OCI-LY7 (cell line): ENCODE measurements at regions of chr12 and their contacts with region 1.

Region 1: DNA sequence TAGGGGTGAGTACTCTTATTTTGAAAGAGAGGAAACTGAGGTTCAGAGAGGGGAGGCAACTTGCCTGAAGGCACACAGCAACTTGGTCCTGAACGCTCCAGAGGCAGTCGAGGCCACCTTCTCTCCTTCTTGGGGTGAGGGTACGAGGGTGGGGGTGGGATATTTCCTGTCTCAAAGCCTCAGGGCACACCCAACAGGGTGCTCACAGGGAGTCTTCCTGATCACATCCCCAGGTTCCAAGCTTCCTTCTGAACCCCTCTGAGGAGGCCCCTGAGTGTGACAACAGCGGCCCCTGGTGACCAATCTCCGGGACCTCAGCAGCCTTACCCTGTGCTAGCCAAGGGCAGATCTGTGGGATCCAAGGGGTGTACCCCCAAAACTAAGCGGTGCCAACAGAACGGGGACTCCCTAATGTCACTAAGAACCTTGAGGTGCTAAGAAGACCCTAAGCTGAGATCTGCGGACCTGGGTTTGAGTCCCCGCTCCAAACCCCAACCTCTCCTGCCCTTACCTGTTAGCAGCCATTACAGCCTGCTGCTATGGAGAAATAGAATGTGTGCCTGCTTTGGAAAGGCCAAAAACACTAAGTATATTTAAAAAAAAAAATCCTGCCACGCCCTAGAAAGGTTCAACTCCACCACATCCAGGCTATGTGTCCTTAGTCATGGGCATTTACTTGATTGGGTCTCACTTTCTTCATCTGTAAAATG is 57.9 kb downstream of the TRPV4 start:
- DNase-seq: peak; percentile 62
- H3K4me3 ChIP-seq: no peak overlapping the region
- H3K27ac ChIP-seq: no peak overlapping the region
- H3K4me1 ChIP-seq: peaks cover 10% of the 10 kb centered on the region
- CTCF ChIP-seq: peak; percentile 90

Region 2: DNA sequence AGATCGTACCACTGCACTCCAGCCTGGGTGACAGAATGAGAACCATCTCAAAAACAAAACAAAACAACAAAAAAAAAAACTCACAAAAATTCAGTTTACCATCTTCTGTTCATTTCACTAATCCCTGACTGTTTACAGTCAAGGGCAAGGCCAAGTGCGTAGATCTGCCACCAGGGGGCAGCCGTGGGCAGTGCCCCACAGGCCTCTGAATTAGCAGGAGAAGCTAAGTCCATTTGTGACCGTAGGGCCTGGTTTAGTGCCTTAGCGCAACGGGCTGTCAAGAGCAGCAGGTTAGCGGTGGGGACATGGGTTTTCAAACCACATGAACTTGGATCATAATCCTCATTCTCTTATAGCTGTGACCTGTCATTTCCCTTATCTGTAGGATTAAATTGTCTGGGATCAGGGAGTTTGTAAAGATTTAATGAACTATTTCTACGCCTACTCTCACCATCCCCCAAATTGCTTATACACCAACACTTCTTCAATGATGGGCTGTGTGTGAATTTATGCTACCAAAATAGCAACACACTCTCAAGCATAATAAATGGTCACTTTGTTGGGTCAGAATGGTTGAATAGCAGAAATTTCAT is 347.2 kb before region 1 on chr12:
- CTCF ChIA-PET with region 1: no interaction called
- POLR2A ChIA-PET with region 1: no interaction called
- intact Hi-C with region 1: loop called (anchors 2 kb)
- DNase-seq: peak; percentile 76
- H3K4me3 ChIP-seq: no peak overlapping the region
- H3K27ac ChIP-seq: no peak overlapping the region
- H3K4me1 ChIP-seq: no peaks in the 10 kb centered on the region
- CTCF ChIP-seq: peak; percentile 96

Region 3: DNA sequence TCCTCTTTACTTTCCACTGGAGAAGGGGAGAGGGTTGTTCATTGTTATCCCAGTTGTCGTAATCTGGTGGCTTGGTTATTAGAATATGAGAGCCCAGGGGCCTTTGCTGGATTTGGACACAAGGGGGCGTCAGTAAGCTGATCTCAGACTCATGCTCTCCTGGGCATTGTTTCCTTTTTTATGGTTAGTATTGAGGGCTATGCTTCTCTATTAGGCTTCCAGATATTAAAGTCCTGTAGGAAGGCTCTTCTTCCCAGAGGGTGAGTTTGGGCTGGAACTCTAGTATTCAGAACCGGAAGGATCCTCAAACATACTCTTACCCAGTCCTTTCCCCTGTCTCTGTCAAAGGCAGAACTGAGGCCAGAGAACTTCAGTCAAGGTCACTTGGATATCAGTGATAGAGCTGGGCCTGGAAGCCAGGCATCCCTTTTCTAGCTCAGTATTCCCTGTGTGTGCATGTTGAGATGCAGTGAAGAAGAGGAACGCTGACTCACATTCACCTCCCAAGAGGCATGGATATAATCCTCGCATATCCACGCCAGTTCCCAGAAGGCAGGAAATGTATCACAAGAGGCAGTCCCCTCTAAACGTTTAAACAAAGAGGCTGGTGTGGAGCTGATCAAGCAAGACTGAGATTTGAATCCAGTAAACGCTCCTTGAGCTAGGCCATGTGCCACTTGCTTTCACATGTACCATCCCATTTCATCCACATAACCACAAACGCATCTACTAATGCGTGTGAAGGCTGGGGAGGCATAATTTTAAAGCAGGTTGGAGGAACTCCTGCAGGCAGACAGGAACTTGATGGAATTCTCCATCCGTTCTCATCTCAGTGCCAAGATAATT is 256.3 kb before region 1 on chr12:
- CTCF ChIA-PET with region 1: no interaction called
- POLR2A ChIA-PET with region 1: no interaction called
- intact Hi-C with region 1: loop called (anchors 1 kb)
- DNase-seq: peak; percentile 61
- H3K4me3 ChIP-seq: no peak overlapping the region
- H3K27ac ChIP-seq: no peak overlapping the region
- H3K4me1 ChIP-seq: no peaks in the 10 kb centered on the region
- CTCF ChIP-seq: peak; percentile 98

Region 4: DNA sequence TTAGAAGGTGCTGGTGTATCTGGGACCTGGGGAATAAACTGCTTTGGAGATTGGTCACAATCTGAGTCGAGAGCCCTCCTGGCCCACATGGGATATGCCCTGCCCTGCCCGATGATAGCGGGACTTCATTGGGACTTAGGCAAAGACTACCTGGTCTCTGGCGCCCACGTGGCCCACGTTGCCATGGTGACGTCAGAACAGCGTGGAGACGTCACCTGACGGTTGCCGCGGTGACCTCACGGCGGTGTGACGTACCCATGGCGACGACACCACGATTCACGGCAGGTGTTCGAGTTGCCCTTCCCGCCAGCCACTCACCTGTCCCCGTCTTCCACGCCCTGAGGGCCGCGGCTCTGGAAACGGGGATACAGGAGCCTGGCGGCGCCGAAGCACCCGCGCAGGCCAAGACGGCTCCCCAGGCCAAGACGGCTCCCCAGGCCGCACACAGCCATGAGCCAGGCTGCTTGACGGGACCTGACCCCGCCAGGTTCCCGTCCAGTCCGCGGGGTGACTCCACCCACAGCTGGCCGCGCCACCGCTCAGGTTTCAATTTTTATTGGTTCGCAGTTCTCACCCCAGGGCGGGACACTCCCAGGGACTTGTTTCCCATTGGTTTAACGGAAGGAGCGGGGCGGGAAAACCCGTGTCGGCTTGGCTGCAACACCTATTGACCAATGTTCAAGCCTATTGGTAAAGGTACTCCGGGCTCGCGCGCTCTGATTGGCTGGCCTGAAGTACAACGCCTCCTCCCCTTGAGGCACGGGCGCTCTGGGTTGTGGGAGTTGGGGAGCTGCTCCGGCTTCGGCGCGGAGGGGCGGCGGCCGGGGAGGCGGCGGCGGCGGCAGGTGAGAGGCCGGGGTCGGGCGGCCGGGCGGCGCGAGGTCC is 202.1 kb before region 1 on chr12 and contains the starts of genes MMAB and MVK:
- CTCF ChIA-PET with region 1: no interaction called
- POLR2A ChIA-PET with region 1: no interaction called
- intact Hi-C with region 1: no loop called
- DNase-seq: peak; percentile 99
- H3K4me3 ChIP-seq: peak within 1 kb of the TSS; percentile 75
- H3K27ac ChIP-seq: peak within 1 kb of the TSS; percentile 65
- H3K4me1 ChIP-seq: peaks cover 17% of the 10 kb centered on the region
- CTCF ChIP-seq: no peak
- total RNA-seq, gene MMAB: 44.1 and 59.8 TPM in 2 replicates
- total RNA-seq, gene MVK: 20.0 and 27.0 TPM in 2 replicates

Region 5: DNA sequence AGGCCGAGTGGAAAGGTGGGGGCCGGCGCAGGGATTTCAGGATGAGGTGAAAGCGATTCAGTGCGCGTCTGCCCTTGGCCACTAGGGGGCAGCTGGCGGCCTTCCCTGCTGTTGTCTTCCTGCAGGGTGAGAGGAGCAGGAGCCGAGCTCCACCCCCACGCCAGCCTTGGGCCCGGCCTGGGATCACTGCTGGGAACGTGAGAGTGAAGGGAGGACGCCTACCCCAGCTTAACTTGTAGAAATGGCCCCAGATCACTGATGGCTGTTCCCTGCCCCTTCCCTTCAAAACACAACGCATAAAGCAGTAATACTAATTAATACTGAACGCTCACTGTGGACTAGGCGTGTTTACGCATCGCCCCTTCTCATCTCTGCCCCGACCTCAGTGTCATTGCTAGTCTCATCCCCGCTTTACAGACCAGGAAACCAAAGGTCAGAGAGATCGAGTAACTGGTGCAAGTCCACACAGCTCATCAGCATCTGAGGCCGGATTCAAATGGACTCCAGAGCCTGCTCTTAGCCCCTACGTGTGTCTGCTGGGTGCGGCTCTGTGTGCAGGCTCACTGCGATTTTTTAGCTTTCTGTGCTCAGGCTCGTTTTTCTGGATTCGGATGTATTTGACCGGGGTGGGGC is 177.4 kb before region 1 on chr12:
- CTCF ChIA-PET with region 1: no interaction called
- POLR2A ChIA-PET with region 1: no interaction called
- intact Hi-C with region 1: loop called (anchors 1 kb)
- DNase-seq: peak; percentile 63
- H3K4me3 ChIP-seq: no peak overlapping the region
- H3K27ac ChIP-seq: no peak overlapping the region
- H3K4me1 ChIP-seq: no peaks in the 10 kb centered on the region
- CTCF ChIP-seq: peak; percentile 92